BJ (cell line): ENCODE measurements at regions of chr1 and their contacts with region 1.

Region 1: DNA sequence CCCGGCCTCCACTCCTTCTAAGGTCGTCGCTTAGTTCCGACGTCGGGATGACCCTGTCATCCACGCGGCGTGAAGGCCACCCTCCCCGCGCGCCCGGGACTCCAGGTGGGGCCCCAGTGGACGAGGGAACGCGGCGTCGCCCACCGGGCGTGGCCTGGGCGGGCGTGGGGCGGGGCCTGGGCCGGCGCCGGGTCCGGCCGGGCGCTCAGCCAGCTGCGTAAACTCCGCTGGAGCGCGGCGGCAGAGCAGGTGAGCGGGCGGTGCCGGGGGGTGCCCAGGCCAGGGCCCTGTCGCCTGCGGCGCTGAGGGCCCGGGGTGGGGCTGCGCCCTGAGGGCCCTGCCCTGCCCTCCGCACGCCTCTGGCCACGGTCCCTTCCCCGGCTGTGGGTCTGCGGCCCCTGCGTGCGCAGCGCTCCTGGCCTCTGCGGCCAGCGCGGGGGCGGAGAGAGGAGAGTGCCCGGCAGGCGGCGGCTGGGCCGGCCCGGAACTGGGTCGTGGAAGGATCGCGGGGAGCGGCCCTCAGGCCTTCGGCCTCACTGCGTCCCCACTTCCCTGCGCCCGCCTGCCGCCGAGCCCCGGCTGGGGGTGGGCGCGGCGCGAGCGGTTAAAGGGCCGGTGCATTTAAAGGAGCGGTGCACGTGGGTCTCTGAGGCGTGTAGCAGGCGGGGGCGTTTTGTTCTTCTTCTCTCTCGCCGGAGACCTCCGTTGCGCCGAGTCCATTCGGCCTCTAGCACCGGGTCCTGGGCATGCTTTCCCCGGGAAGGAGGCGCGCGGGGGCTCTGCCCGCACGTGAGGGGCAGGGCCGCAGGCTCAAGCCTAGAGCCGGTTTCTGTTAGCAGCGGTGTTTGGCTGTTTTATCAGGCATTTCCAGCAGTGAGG is at the start of gene PSEN2:
- DNase-seq: no peak
- H3K4me3 ChIP-seq: peak within 1 kb of the TSS; percentile 66
- H3K27me3 ChIP-seq: no peaks in the 10 kb centered on the region
- CTCF ChIP-seq: peak; percentile 13; the same call in 1 of the 2 replicates
- polyA plus RNA-seq, gene PSEN2: 23.4 and 32.1 TPM in 2 replicates

Region 2: GRCh38 chr1:226846801-226847200 is 23.8 kb before region 1 on chr1:
- CTCF ChIA-PET with region 1: interaction called, 3 read pairs
- POLR2A ChIA-PET with region 1: interaction called, 14 read pairs
- DNase-seq: peak; percentile 43
- H3K4me3 ChIP-seq: no peak overlapping the region
- H3K27me3 ChIP-seq: no peaks in the 10 kb centered on the region; the same call in 1 of the 2 replicates
- CTCF ChIP-seq: no peak

Region 3: GRCh38 chr1:227070638-227071285 is 200.1 kb after region 1 on chr1:
- CTCF ChIA-PET with region 1: no interaction called
- POLR2A ChIA-PET with region 1: interaction called, 21 read pairs
- DNase-seq: no peak
- H3K4me3 ChIP-seq: no peak overlapping the region
- H3K27me3 ChIP-seq: no peaks in the 10 kb centered on the region
- CTCF ChIP-seq: no peak